CD4-positive, alpha-beta memory T cell (primary cell): ENCODE measurements at regions of chr3 and their contacts with region 1.

Region 1: GRCh38 chr3:42387802-42388651 is 22.4 kb downstream of the LYZL4 start:
- DNase-seq: peak in 4 of 5 donors; percentile 3 to 41 (median 21)
- H3K4me3 ChIP-seq: no peak overlapping the region
- H3K4me3 Mint-ChIP-seq: peak overlapping the region in 7 of 8 donors; percentile 5 to 67 (median 40)
- H3K27ac ChIP-seq: no peak overlapping the region
- H3K27ac Mint-ChIP-seq: peak overlapping the region; percentile 66 to 89 (median 82)
- H3K4me1 ChIP-seq: peaks cover 23% of the 10 kb centered on the region
- H3K4me1 Mint-ChIP-seq: peaks cover 16 to 22% (median 20%) of the 10 kb centered on the region in 4 donors
- H3K27me3 ChIP-seq: no peaks in the 10 kb centered on the region
- H3K27me3 Mint-ChIP-seq: peaks cover 0 to 14% of the 10 kb centered on the region in 2 donors

Region 2: GRCh38 chr3:42345811-42346210 is 42.2 kb before region 1 on chr3:
- CTCF ChIA-PET with region 1: no interaction called
- POLR2A ChIA-PET with region 1: no interaction called
- intact Hi-C with region 1: loop called (anchors 5 kb)
- DNase-seq: peak in 2 of 5 donors; percentile 9 to 25
- H3K4me3 ChIP-seq: no peak overlapping the region
- H3K4me3 Mint-ChIP-seq: peak overlapping the region in 1 of 8 donors; percentile 15
- H3K27ac ChIP-seq: no peak overlapping the region
- H3K27ac Mint-ChIP-seq: peak overlapping the region in 2 of 7 donors; percentile 43 to 69
- H3K4me1 ChIP-seq: peaks cover 15% of the 10 kb centered on the region
- H3K4me1 Mint-ChIP-seq: peaks cover 0 to 8% (median 0%) of the 10 kb centered on the region in 4 donors
- H3K27me3 ChIP-seq: no peaks in the 10 kb centered on the region
- H3K27me3 Mint-ChIP-seq: peaks cover 5 to 8% of the 10 kb centered on the region in 2 donors

Region 3: GRCh38 chr3:42412526-42413155 is 24.6 kb after region 1 on chr3:
- CTCF ChIA-PET with region 1: no interaction called
- POLR2A ChIA-PET with region 1: no interaction called
- intact Hi-C with region 1: no loop called
- DNase-seq: no peak
- H3K4me3 ChIP-seq: no peak overlapping the region
- H3K4me3 Mint-ChIP-seq: no peak overlapping the region
- H3K27ac ChIP-seq: no peak overlapping the region
- H3K27ac Mint-ChIP-seq: no peak overlapping the region
- H3K4me1 ChIP-seq: no peaks in the 10 kb centered on the region
- H3K4me1 Mint-ChIP-seq: no peaks in the 10 kb centered on the region
- H3K27me3 ChIP-seq: no peaks in the 10 kb centered on the region
- H3K27me3 Mint-ChIP-seq: peaks cover 17 to 23% of the 10 kb centered on the region in 2 donors